Aorta (tissue), 5 donors: ENCODE measurements at regions of chr20 and their contacts with region 1.

Region 1: GRCh38 chr20:37992802-37993409 is 40.4 kb downstream of the TTI1 start:
- DNase-seq: no peak
- ATAC-seq: no peak
- H3K4me3 ChIP-seq: no peak overlapping the region
- H3K27ac ChIP-seq: peak overlapping the region in 1 of 2 donors; percentile 17
- H3K4me1 ChIP-seq: peaks cover 0 to under 1% of the 10 kb centered on the region in 2 donors
- H3K27me3 ChIP-seq: no peaks in the 10 kb centered on the region

Region 2: DNA sequence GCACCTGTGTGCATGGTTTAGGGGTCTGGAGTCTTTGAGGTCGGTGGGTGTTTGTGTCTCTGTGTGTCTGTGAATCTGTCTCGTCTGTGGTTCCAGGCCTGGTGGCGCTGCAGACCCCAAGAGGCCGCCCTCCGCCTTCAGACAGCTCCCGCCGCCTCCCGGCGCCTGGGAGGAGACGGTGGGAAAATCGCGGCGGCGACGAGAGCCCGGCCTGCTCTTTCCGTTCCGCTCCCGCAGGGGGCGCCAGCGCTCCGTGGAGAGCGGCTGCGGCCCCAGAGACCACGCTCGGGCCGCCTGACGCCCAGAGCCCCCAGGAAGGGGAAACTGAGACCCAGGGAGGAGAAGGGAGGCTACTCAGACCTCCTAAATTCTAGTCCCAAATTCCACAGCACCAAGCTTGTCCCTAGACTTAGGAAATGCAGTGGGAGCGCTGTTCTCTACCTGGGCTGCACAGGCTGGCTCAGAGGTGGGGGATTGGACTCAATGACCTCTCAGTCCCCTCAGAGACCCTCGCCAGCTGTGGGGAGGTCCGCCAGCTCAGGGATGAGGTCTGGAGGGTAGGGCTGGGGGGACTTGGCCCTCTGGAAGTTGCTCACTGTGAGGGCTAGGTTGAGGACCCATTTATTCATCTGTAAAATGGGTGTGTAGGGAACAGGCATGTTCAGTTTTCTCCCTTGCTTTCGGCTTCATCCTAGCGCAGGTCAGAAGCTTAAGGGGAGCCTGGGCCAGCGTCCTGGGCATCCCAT is 428.3 kb before region 1 on chr20:
- intact Hi-C with region 1: loop called (anchors 1 to 2 kb)
- DNase-seq: peak in 1 of 2 donors; percentile 88
- ATAC-seq: peak; percentile 71
- H3K4me3 ChIP-seq: no peak overlapping the region
- H3K27ac ChIP-seq: no peak overlapping the region
- H3K4me1 ChIP-seq: no peaks in the 10 kb centered on the region
- H3K27me3 ChIP-seq: no peaks in the 10 kb centered on the region

Region 3: DNA sequence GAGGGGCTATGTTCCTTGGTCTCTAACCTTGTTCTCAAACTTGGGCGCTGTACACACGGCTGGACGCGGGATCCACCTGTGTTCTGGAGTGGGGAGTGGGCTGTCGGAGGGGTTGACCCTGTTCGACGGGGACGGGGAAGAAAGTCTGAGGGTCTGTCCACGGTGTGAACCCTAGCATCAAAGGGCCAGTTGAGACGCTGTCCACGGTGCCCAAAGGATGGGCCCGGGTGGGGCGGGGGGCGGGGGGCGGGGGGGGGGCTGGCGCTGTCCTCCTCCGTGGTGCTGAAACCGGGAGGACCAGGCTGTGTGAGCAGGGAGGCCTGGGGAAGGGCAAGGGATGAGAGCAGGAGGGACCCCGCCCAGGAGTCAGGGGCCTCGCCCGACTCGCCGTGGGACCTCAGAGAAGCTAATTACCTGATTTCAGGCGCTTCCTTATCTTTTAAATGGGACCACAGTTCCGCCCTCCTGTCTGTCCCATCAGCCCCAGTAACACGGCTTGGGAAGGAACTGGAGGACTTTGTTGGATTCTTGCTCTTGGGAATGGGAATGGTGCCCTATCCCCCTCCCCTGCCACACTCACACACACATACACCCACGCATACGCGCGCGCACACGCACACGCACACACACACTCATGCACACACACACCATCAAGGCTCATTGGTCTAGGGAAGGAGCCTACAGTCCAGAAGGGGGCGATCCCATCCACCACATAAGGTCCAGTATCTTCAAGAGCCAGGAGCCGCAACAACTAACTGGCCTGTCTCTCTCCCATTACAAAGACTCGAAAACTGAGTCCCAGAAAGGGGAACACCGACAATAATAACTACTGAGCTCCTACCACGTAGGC is 91.0 kb before region 1 on chr20:
- intact Hi-C with region 1: loop called in 1 of 2 experiments (anchors 2 kb)
- DNase-seq: no peak
- ATAC-seq: peak; percentile 62
- H3K4me3 ChIP-seq: no peak overlapping the region
- H3K27ac ChIP-seq: no peak overlapping the region
- H3K4me1 ChIP-seq: no peaks in the 10 kb centered on the region
- H3K27me3 ChIP-seq: no peaks in the 10 kb centered on the region